GM18951 (cell line): ENCODE measurements at regions of chr11 and their contacts with region 1.

Region 1: DNA sequence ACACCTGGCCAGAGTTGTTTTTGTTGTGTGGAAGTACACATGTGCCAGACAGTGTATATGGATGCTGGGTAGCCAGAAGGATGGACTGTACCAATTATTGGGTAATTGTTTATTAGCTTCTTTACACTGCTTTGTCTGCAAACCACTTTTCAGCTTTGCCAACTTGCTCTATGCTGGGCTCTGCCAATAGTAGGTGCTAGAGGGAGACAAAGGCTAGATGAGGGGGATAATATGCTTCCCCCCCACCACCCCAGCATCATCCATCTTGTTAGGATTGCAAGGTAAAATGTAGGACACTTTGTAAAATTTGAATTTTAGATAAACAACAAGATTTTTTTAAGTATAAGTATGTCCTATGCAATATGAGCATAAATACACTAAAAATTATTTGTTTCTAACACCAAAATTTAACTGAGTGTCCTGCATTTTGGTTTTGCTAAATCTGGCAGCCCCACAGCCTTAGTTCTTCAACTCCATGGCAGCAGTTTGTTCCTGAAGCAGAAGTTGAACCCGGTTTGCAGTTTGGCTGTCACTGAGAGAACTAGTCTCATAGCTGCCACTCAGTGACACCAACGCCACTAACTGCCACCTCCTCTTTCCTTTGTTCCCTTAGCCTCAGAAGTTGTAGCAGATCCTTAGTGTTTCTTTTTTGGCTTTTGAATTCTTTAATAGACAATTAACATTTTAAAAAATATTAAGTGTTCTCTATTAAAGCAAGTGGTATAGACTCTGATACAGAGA is 78.8 kb downstream of the CCDC81 start:
- POLR2A ChIP-seq: no peak

Region 2: DNA sequence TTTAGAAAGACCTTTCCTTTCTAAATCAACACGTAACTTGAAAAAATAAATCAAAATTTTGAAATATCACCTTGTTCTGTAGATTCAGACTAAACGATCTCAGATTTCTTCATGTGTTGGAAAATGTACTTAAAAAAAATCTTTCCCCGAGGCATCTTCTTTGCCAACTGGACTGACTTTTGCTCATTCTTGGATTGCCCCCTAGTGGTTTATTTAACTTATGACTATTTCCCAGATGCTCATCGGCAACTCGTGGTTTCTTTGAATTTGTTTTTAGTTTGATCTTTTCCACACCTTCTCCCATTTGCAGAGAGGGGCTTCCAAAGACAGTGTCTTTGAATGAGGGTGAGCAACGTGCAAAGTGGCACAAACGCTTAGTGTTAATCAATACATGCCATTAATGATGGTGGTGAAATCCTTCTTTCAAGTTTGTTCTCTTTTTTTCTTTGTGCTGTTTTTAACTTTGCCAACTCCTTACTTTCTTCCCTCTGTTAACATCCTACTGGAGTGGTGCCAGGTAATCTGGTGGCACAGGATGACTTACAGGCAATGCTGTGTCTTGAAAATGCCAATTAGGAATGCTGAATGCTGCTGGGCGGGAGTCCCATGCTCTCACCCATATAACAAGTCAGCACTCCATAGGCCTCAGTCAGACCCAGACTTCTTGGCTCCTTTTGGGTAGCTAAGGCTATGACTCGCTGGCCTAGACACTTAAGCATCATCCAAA is 365.2 kb after region 1 on chr11:
- in situ Hi-C with region 1: loop called (anchors 5 kb)
- POLR2A ChIP-seq: no peak